ENCODE measurements at regions of chr12 and their contacts with region 1.

Region 1: DNA sequence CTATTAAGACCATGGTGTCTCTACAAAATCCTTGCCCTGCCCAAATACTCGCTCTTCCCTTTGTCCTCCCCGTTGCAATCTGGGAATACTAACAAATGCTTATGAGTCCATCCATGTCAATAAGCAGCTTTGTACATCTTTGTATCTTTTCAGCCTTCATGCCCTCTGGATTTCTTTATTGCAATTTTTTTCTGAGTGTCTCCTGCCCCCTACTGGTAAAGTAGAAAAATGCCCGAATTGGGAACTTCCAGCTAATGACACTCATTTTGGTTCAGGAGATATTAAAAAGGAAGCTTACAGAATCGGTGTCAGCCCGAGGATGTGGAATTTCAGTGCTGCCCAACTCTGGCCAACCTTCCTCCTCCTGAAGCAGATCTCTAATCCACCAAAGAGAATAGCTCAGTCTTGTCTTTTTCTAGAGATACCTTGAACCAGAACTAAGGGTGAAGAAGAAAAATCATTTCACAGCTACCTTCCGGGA is 46.0 kb downstream of the SH2B3 start:
- DNase-seq: peak; percentile 46
- ATAC-seq: peak; percentile 35
- H3K4me3 Mint-ChIP-seq: no peak overlapping the region
- H3K27ac Mint-ChIP-seq: peak overlapping the region; percentile 56
- H3K4me1 Mint-ChIP-seq: peaks cover 53% of the 10 kb centered on the region
- H3K27me3 Mint-ChIP-seq: no peaks in the 10 kb centered on the region

Region 2: GRCh38 chr12:111313833-111314259 is 137.8 kb before region 1 on chr12:
- CTCF ChIA-PET with region 1: no interaction called
- POLR2A ChIA-PET with region 1: no interaction called
- DNase-seq: peak; percentile 74
- ATAC-seq: peak; percentile 76
- H3K4me3 Mint-ChIP-seq: no peak overlapping the region
- H3K27ac Mint-ChIP-seq: no peak overlapping the region
- H3K4me1 Mint-ChIP-seq: no peaks in the 10 kb centered on the region
- H3K27me3 Mint-ChIP-seq: no peaks in the 10 kb centered on the region

Region 3: GRCh38 chr12:111330800-111331752 is 120.6 kb before region 1 on chr12:
- CTCF ChIA-PET with region 1: interaction called, 10 read pairs
- POLR2A ChIA-PET with region 1: no interaction called
- DNase-seq: no peak
- ATAC-seq: peak; percentile 27
- H3K4me3 Mint-ChIP-seq: no peak overlapping the region
- H3K27ac Mint-ChIP-seq: no peak overlapping the region
- H3K4me1 Mint-ChIP-seq: no peaks in the 10 kb centered on the region
- H3K27me3 Mint-ChIP-seq: peaks cover 3% of the 10 kb centered on the region

Region 4: GRCh38 chr12:111405149-111405860 is 46.4 kb before region 1 on chr12:
- CTCF ChIA-PET with region 1: interaction called, 1,088 read pairs
- POLR2A ChIA-PET with region 1: interaction called, 13 read pairs
- DNase-seq: peak; percentile 100
- ATAC-seq: peak; percentile 75
- H3K4me3 Mint-ChIP-seq: peak overlapping the region; percentile 76
- H3K27ac Mint-ChIP-seq: peak overlapping the region; percentile 90
- H3K4me1 Mint-ChIP-seq: peaks cover 51% of the 10 kb centered on the region
- H3K27me3 Mint-ChIP-seq: no peaks in the 10 kb centered on the region

Region 5: DNA sequence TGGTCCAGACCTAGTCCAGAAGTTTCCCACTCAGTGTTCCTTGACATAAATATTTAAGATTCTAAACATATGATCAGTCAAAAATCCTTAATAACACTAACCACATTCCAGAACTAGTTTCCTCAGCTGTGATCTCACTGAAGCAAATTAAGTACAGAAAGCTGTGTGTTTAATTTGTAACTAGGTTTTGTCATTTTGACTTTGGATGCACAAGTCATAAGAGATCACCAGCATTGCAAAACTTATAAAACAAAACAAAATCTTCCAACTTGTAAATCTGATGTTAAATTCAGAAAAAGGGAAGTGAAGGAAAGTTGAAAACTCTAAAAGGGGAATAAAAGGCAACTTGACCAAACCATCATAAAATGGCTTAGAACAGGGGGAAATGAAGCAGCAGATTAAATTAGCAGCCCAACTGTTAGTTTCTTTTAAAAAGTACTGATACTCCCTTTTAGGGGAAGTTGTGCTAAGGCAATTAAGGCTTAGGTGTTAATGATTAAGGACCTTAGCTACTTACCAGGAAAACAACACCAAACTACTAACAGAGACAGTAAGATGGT is 10.6 kb after region 1 on chr12:
- CTCF ChIA-PET with region 1: interaction called, 39 read pairs
- POLR2A ChIA-PET with region 1: interaction called, 4 read pairs
- DNase-seq: no peak
- ATAC-seq: no peak
- H3K4me3 Mint-ChIP-seq: no peak overlapping the region
- H3K27ac Mint-ChIP-seq: no peak overlapping the region
- H3K4me1 Mint-ChIP-seq: no peaks in the 10 kb centered on the region
- H3K27me3 Mint-ChIP-seq: no peaks in the 10 kb centered on the region

Region 6: GRCh38 chr12:111519083-111519482 is 67.4 kb after region 1 on chr12:
- CTCF ChIA-PET with region 1: interaction called, 10 read pairs
- POLR2A ChIA-PET with region 1: no interaction called
- DNase-seq: no peak
- ATAC-seq: no peak
- H3K4me3 Mint-ChIP-seq: no peak overlapping the region
- H3K27ac Mint-ChIP-seq: no peak overlapping the region
- H3K4me1 Mint-ChIP-seq: peaks cover 3% of the 10 kb centered on the region
- H3K27me3 Mint-ChIP-seq: no peaks in the 10 kb centered on the region